PC-3 (cell line): ENCODE measurements at regions of chr5 and their contacts with region 1.

Region 1: DNA sequence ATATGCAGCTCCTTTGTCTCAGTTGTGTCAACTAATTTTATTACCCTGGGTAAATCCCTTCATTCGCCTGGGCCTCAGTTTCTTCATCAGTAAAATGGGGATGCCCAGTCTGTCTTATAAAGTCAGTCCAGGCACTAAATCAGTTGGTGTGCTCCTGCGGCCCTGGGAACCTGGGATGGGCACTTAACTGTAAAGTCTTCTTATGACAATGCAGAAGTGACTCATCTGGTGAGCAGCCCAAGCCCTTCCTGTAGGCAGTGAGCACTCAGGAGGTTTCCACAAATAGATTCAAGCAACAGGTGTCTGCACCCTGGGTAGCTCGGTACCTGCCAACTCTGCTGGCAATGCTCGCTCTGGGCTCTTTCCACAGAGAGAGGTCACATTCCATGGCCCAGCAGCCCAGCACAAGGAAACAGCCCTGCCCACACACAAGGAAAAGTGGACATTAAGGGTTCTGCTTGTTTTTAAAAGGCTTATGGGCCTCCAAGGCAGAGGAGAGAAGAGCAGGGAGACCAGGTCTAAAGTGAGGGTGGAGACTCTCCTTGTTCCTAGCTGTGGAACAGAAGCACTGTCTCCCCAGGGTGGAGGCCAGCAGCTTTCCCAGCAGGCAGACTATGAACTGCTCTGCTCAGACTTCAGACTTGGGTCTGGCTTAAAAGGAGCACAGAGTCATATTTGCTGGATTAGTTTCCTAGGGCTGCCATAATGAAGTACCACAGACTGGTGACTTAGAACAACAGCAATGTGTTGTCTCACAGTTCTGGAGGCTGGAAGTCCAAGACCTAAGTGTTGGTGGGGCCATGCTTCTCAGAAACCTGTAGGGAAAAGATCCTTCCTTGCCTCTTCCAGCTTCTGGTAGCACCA is 89.7 kb upstream of the ADRA1B start:
- DNase-seq: peak; percentile 96
- ATAC-seq: peak; percentile 94
- H3K4me3 ChIP-seq: peak overlapping the region; percentile 9; the same call in 1 of the 2 replicates
- H3K27ac ChIP-seq: peak overlapping the region; percentile 95
- H3K4me1 ChIP-seq: peaks cover 36% of the 10 kb centered on the region
- H3K27me3 ChIP-seq: no peaks in the 10 kb centered on the region
- CTCF ChIP-seq: no peak

Region 2: GRCh38 chr5:159752622-159753275 is 73.8 kb before region 1 on chr5:
- CTCF ChIA-PET with region 1: no interaction called
- POLR2A ChIA-PET with region 1: no interaction called
- intact Hi-C with region 1: loop called (anchors 2 kb)
- DNase-seq: peak; percentile 74
- ATAC-seq: peak; percentile 71
- H3K4me3 ChIP-seq: peak overlapping the region; percentile 32
- H3K27ac ChIP-seq: peak overlapping the region; percentile 87
- H3K4me1 ChIP-seq: peaks cover 56% of the 10 kb centered on the region
- H3K27me3 ChIP-seq: no peaks in the 10 kb centered on the region
- CTCF ChIP-seq: no peak

Region 3: GRCh38 chr5:159773062-159773924 is 53.3 kb before region 1 on chr5:
- CTCF ChIA-PET with region 1: no interaction called
- POLR2A ChIA-PET with region 1: no interaction called
- intact Hi-C with region 1: loop called (anchors 5 kb)
- DNase-seq: peak; percentile 86
- ATAC-seq: peak; percentile 93
- H3K4me3 ChIP-seq: peak overlapping the region; percentile 63
- H3K27ac ChIP-seq: peak overlapping the region; percentile 29
- H3K4me1 ChIP-seq: peaks cover 23% of the 10 kb centered on the region
- H3K27me3 ChIP-seq: no peaks in the 10 kb centered on the region
- CTCF ChIP-seq: peak; percentile 59

Region 4: DNA sequence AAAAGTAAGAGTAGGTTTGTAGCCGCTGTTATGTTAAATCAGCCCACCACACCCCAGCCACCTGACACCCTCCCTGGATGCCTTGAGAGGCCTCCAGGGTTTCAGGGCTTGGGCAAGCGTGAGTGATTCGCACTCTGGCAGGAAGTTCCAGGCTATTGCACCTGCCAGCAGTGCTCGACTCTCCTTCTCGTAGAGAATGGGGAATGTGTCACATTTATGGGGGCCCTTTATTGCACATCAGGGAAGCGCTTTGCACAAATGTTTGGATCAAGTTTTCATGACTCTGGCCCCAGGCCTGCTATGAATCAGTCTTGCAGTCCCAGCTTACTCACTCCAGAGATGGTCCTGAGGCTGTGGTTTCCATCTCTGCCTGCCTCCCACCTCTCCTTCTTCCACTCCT is 23.6 kb after region 1 on chr5:
- CTCF ChIA-PET with region 1: no interaction called
- POLR2A ChIA-PET with region 1: no interaction called
- intact Hi-C with region 1: loop called (anchors 1 kb)
- DNase-seq: peak; percentile 97
- ATAC-seq: peak; percentile 80
- H3K4me3 ChIP-seq: peak overlapping the region; percentile 46; the same call in 1 of the 2 replicates
- H3K27ac ChIP-seq: peak overlapping the region; percentile 96
- H3K4me1 ChIP-seq: peaks cover 26% of the 10 kb centered on the region
- H3K27me3 ChIP-seq: no peaks in the 10 kb centered on the region
- CTCF ChIP-seq: no peak

Region 5: GRCh38 chr5:159905496-159905895 is 78.9 kb after region 1 on chr5:
- CTCF ChIA-PET with region 1: no interaction called
- POLR2A ChIA-PET with region 1: no interaction called
- intact Hi-C with region 1: loop called (anchors 5 kb)
- DNase-seq: peak; percentile 98
- ATAC-seq: peak; percentile 93
- H3K4me3 ChIP-seq: no peak overlapping the region
- H3K27ac ChIP-seq: peak overlapping the region; percentile 87
- H3K4me1 ChIP-seq: peaks cover 63% of the 10 kb centered on the region
- H3K27me3 ChIP-seq: no peaks in the 10 kb centered on the region
- CTCF ChIP-seq: no peak

Region 6: GRCh38 chr5:160044967-160045366 is 218.4 kb after region 1 on chr5:
- CTCF ChIA-PET with region 1: no interaction called
- POLR2A ChIA-PET with region 1: no interaction called
- intact Hi-C with region 1: no loop called
- DNase-seq: no peak
- ATAC-seq: no peak
- H3K4me3 ChIP-seq: no peak overlapping the region
- H3K27ac ChIP-seq: no peak overlapping the region
- H3K4me1 ChIP-seq: peaks cover 21% of the 10 kb centered on the region
- H3K27me3 ChIP-seq: no peaks in the 10 kb centered on the region
- CTCF ChIP-seq: no peak